Left lung (tissue), 14 donors: ENCODE measurements at regions of chr16 and their contacts with region 1.

Region 1: GRCh38 chr16:19086322-19087199 is 19.1 kb downstream of the COQ7 start:
- DNase-seq: peak; percentile 88 to 99 (median 93)
- ATAC-seq: peak; percentile 100
- H3K4me3 ChIP-seq: peak overlapping the region; percentile 34 to 36
- H3K27ac ChIP-seq: peak overlapping the region in 1 of 2 donors; percentile 14
- H3K4me1 ChIP-seq: peaks cover 7 to 18% of the 10 kb centered on the region in 2 donors
- H3K27me3 ChIP-seq: peaks cover 0 to 12% of the 10 kb centered on the region in 2 donors
- CTCF ChIP-seq: peak; percentile 98 to 99

Region 2: GRCh38 chr16:19167710-19168370 is 81.3 kb after region 1 on chr16 and contains the start of gene SYT17:
- intact Hi-C with region 1: loop called in 1 of 2 experiments (anchors 10 kb)
- DNase-seq: peak; percentile 62 to 94 (median 80)
- ATAC-seq: peak; percentile 92
- H3K4me3 ChIP-seq: peak within 1 kb of the TSS; percentile 61 to 71
- H3K27ac ChIP-seq: peak within 1 kb of the TSS; percentile 17 to 75
- H3K4me1 ChIP-seq: peaks cover 0 to 24% of the 10 kb centered on the region in 2 donors
- H3K27me3 ChIP-seq: peaks cover 0 to 31% of the 10 kb centered on the region in 2 donors
- CTCF ChIP-seq: peak; percentile 88 to 89
- polyA plus RNA-seq, gene SYT17: 13.4 to 20.7 (median 15.2) TPM